AG04450 (cell line): ENCODE measurements at regions of chr19 and their contacts with region 1.

Region 1: DNA sequence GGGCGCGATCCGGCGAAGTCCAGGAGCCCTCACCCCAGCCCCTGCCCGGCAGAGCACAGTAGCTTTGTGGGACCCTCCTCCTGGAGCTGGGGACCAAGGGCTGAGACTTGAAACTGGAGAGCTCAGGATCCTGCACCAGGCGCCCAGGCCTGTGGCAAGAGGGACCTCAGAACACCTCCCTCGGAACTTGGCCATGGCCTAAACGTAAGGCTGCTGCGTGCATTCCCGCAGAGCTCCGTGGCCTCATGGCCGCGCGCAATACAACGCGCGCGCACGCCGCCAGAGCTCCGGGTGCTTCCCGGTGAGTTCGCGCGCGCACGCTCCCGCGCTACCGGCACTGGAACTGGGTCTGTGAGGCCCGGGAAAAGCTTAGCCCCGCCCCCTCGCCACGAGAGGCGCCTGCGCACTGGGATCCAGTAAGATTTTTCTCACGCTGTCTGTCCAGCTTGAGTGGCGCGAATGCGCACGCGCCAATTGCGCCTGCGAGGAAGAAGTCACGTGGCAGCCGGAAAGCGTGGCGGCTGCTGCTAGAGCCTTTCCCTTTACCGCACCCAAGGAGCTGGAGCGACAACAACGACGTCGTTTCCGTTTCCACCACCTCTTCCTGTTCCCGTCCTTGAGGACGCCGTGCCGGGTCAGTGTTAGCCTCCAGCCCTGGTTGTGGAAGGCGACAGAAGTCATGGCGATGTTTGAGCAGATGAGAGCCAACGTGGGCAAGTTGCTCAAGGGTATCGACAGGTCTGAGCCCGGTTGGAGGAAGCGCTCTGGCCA is at the start of gene EIF3K:
- DNase-seq: peak; percentile 98
- H3K4me3 ChIP-seq: peak within 1 kb of the TSS; percentile 97
- H3K27ac ChIP-seq: peak within 1 kb of the TSS; percentile 43
- H3K27me3 ChIP-seq: no peaks in the 10 kb centered on the region
- CTCF ChIP-seq: no peak
- polyA plus RNA-seq, gene EIF3K: 168 and 250 TPM in 2 replicates

Region 2: GRCh38 chr19:38544034-38544958 is 74.5 kb before region 1 on chr19:
- CTCF ChIA-PET with region 1: interaction called, 13 read pairs
- POLR2A ChIA-PET with region 1: no interaction called
- DNase-seq: peak; percentile 24
- H3K4me3 ChIP-seq: no peak overlapping the region
- H3K27ac ChIP-seq: no peak overlapping the region
- H3K27me3 ChIP-seq: peaks cover 3% of the 10 kb centered on the region
- CTCF ChIP-seq: peak; percentile 62